Left cardiac atrium (tissue), 4 donors: ENCODE measurements at regions of chr3 and their contacts with region 1.

Region 1: GRCh38 chr3:155481089-155481488 is 187.6 kb upstream of the STRIT1 start:
- DNase-seq: no peak
- ATAC-seq: peak in 1 of 2 donors; percentile 65

Region 2: DNA sequence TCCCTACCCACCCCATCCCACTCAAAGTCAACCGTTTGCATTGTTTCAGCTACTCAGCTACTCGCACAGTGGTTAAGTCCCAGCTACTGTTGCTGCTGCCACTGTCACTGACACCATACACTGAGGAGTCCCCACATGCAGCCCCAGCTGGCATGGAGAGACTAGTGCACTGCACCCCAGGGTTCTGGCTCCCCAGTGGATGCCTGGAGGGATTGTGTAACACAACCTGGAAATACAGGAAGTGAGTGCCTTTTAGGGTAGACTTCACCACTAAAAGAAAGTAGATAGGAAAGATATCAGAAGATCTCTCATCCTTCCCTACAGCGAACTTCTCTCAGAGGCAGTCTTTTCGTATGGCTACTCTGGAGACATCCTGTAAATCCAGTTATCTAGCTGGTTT is 18.4 kb before region 1 on chr3:
- intact Hi-C with region 1: loop called in 1 of 2 experiments (anchors 2 kb)
- DNase-seq: no peak
- ATAC-seq: no peak